ENCODE measurements at regions of chr20 and their contacts with region 1.

Region 1: DNA sequence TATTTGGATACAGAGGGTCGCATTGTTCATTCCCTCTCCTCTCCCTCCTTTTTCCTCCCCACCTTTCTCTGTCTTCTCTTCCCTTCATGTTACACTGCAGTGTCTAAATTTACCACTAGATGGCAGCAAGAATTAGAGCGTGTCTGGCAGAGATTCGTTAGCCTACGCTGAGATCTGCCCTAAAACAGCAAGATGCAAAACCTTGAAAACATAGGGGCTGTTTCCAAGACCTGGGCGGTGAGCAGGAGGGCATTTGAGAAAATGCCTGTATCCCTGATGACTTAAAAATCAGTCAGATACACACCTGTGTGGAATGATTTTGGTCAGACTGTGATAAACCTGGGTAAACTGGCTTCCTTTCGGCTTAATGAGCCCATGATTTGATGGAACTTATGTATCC is 101.5 kb upstream of the ISM1 start:
- DNase-seq: peak; percentile 51
- ATAC-seq: peak; percentile 88
- H3K4me3 ChIP-seq: no peak overlapping the region
- H3K27ac ChIP-seq: no peak overlapping the region
- H3K4me1 ChIP-seq: no peaks in the 10 kb centered on the region
- H3K27me3 ChIP-seq: peaks cover 19% of the 10 kb centered on the region
- CTCF ChIP-seq: peak; percentile 64 to 92 (median 82)
- POLR2A ChIP-seq: no peak
- RAD21 ChIP-seq: peak; percentile 74

Region 2: DNA sequence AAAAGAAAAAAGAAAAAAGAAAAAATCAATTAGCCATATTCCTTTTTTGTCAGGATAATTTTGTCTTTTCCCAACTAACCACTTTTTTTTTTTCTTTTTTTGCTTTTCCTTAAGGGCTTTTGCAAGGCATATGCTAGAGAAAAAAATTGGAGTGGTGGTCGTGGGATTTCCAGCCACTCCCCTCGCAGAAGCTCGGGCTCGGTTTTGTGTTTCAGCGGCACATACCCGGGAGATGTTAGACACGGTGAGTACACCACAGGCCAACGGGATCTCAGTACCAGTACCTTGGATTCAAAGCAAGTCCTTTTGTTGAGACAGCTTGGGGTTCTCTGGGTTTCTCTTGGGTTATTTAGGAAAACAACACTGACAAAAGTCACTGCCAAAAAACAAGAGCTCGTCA is 40.3 kb after region 1 on chr20:
- CTCF ChIA-PET with region 1: no interaction called
- POLR2A ChIA-PET with region 1: no interaction called
- RAD21 ChIA-PET with region 1: no interaction called
- intact Hi-C with region 1: no loop called
- DNase-seq: no peak
- ATAC-seq: no peak
- H3K4me3 ChIP-seq: no peak overlapping the region
- H3K27ac ChIP-seq: no peak overlapping the region
- H3K4me1 ChIP-seq: no peaks in the 10 kb centered on the region
- H3K27me3 ChIP-seq: peaks cover 9% of the 10 kb centered on the region; the same call in 1 of the 2 replicates
- CTCF ChIP-seq: no peak
- POLR2A ChIP-seq: no peak
- RAD21 ChIP-seq: no peak

Region 3: GRCh38 chr20:13174402-13174801 is 54.8 kb after region 1 on chr20:
- CTCF ChIA-PET with region 1: no interaction called
- POLR2A ChIA-PET with region 1: no interaction called
- RAD21 ChIA-PET with region 1: no interaction called
- intact Hi-C with region 1: no loop called
- DNase-seq: no peak
- ATAC-seq: no peak
- H3K4me3 ChIP-seq: no peak overlapping the region
- H3K27ac ChIP-seq: no peak overlapping the region
- H3K4me1 ChIP-seq: no peaks in the 10 kb centered on the region
- H3K27me3 ChIP-seq: no peaks in the 10 kb centered on the region
- CTCF ChIP-seq: no peak
- POLR2A ChIP-seq: no peak
- RAD21 ChIP-seq: no peak

Region 4: DNA sequence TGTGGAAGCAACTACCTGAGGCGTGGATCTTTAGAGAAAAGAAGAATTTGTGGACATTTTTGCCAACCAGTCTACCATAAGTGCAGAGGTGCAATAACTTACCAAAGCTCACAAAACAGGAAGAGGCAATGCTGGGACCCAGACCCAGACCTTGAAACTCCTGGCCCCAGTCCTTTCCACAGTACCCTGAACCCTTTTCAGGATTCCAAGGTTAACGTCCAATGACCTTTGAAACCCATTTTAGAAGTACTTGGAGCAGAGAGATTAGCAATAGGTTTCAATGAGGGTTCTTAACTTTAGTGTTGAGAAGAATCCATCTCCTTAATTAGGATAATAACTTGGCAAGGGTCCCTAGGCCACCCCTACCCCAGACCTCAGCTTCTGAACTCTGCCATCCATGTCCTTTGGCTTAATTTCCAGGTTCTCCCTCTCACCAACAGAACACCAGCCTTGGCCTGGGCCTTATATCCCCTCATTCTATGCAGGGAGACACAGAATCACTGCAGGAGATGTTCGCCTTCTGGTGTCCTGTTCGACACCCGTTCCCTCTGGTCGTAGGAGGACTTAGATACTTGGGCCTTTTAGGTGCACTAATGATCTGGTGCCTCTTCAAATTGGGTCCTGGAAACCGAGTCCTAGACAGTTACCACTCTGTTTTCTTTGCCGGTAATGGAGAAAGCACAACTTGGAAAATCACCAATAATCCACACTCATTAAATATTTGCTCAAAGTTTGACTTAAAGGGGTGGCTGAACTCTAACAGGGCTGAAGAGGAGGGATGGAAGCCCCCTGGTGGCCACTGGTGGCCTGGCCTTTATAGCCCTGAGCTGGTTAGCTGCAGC is 142.1 kb after region 1 on chr20:
- CTCF ChIA-PET with region 1: interaction called, 15 read pairs
- POLR2A ChIA-PET with region 1: no interaction called
- RAD21 ChIA-PET with region 1: no interaction called
- intact Hi-C with region 1: loop called (anchors 1 kb)
- DNase-seq: peak; percentile 26
- ATAC-seq: peak; percentile 98
- H3K4me3 ChIP-seq: no peak overlapping the region
- H3K27ac ChIP-seq: no peak overlapping the region
- H3K4me1 ChIP-seq: peaks cover 6 to 9% of the 10 kb centered on the region in 2 experiments; a peak in 3 of 4 replicates
- H3K27me3 ChIP-seq: no peaks in the 10 kb centered on the region
- CTCF ChIP-seq: peak; percentile 31 to 87 (median 86); a peak in 5 of 6 replicates
- POLR2A ChIP-seq: no peak
- RAD21 ChIP-seq: peak; percentile 47

Region 5: DNA sequence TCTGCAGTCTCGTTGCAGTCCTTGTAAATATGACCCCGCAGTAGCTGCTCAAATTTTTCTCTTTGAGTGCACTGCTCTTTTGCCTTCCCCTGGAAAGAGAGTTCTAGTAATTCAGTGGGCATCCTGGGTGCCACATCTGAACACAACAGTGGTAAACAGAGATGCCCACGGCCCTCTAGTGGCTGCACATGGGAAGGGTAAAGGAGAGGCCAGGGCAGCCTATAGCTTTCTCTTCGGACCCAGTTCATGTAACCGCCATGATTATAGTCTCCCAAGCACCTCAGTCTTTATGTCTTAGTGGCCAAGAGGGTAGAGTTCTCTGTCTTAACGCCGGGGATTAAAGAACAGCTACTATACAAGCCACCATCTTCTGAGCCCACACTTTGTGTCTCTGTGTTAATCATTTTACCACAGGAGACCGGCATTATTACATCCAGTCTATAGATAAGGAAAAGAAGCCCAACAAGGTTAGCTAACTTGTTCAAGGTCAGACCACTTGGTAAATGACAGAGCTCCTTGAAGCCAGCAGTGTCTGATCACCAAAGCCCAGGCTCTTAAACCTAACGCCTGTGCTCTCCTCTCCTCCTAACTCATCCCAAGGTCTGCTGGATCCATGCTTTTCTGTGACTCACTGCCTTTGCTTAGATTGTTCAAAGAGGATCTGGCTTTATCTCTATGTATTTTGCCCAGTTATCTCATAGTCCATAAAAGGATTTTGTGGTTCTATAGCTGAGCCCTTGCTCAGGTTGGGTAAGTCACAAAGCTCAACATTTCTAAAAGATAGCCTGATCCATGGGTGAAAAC is 183.3 kb after region 1 on chr20:
- CTCF ChIA-PET with region 1: interaction called, 7 read pairs
- POLR2A ChIA-PET with region 1: no interaction called
- RAD21 ChIA-PET with region 1: no interaction called
- intact Hi-C with region 1: loop called (anchors 1 kb)
- DNase-seq: peak; percentile 4
- ATAC-seq: peak; percentile 99
- H3K4me3 ChIP-seq: no peak overlapping the region
- H3K27ac ChIP-seq: no peak overlapping the region
- H3K4me1 ChIP-seq: no peaks in the 10 kb centered on the region
- H3K27me3 ChIP-seq: no peaks in the 10 kb centered on the region
- CTCF ChIP-seq: peak; percentile 21 to 84 (median 80); a peak in 5 of 6 replicates
- POLR2A ChIP-seq: no peak
- RAD21 ChIP-seq: peak; percentile 49

Region 6: GRCh38 chr20:13546497-13547131 is 427.0 kb after region 1 on chr20:
- CTCF ChIA-PET with region 1: interaction called, 15 read pairs
- POLR2A ChIA-PET with region 1: no interaction called
- RAD21 ChIA-PET with region 1: no interaction called
- intact Hi-C with region 1: loop called (anchors 5 kb)
- DNase-seq: peak; percentile 69
- ATAC-seq: peak; percentile 86
- H3K4me3 ChIP-seq: no peak overlapping the region
- H3K27ac ChIP-seq: no peak overlapping the region
- H3K4me1 ChIP-seq: no peaks in the 10 kb centered on the region
- H3K27me3 ChIP-seq: no peaks in the 10 kb centered on the region
- CTCF ChIP-seq: peak; percentile 53 to 89 (median 63); a peak in 5 of 6 replicates
- POLR2A ChIP-seq: no peak
- RAD21 ChIP-seq: peak; percentile 68

Region 7: DNA sequence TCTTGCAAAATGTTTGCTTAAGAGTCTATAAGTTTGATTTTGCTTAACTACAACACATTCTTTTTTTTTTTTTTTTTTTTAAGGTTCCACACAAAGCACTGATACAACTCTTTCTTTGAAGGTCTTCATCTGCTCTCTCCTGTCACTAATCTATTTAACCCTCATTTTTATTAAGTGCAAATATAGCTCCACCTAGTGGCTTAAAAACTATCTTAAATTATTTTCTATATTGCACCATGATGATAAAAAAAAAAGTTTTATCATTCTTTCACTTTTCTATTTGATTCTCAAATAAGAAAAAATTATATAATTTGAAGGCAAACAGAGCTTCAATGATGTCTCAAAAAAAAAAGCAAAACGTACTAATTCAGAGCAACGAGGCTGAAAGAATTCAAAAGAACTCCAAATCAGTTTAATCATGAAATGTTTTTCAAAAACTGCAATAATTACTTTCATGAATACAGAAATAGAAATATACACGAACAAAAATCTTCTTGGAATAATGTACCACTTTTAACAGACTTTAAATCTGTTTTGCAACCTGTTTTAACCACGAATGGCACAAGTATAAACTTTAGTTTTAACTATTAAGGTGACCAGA is 652.4 kb after region 1 on chr20:
- CTCF ChIA-PET with region 1: interaction called, 6 read pairs
- POLR2A ChIA-PET with region 1: no interaction called
- RAD21 ChIA-PET with region 1: no interaction called
- intact Hi-C with region 1: loop called (anchors 5 kb)
- DNase-seq: no peak
- ATAC-seq: no peak
- H3K4me3 ChIP-seq: no peak overlapping the region
- H3K27ac ChIP-seq: no peak overlapping the region
- H3K4me1 ChIP-seq: peaks cover 0 to under 1% of the 10 kb centered on the region in 2 experiments; a peak in 2 of 4 replicates
- H3K27me3 ChIP-seq: no peaks in the 10 kb centered on the region
- CTCF ChIP-seq: peak; percentile 8 to 50 (median 31); a peak in 3 of 6 replicates
- POLR2A ChIP-seq: no peak
- RAD21 ChIP-seq: peak; percentile 40

Region 8: DNA sequence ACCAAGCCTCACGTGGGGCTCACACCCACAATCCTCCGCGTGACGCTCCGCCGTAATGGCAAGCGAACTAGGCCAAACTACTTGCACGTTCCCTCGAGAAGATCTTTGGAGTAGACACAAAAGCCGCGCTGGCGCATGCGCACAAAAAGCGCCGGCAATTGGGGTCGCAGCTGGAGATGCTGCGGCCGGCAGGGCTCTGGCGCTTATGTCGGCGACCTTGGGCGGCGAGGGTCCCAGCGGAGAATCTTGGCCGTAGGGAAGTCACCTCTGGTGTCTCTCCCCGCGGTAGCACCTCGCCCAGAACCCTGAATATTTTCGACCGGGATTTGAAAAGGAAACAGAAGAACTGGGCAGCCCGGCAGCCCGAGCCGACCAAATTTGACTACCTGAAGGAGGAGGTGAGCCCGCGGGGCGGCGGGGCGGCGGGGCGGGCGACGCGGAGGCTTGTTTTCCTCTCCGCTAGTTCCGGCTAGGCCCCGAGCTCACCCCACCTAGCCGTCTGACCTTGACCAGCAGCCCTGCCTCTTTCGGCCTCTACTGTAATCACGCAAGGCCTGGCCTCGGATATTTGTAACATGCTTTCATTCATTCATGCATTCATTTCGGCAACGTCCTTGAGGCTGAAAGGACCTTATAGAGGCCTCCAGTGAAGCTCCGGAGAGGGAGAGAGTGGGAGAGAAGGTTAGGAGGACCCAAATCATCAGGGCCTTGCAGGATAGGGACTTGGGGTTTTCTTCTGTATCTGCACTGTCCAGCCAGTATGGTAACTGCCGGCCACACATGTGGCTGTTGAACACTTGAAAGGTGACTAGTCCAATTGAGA is 665.5 kb after region 1 on chr20 and contains the starts of genes ESF1 and NDUFAF5:
- CTCF ChIA-PET with region 1: interaction called, 3 read pairs
- POLR2A ChIA-PET with region 1: no interaction called
- RAD21 ChIA-PET with region 1: no interaction called
- intact Hi-C with region 1: loop called (anchors 5 kb)
- DNase-seq: peak; percentile 95
- ATAC-seq: peak; percentile 88
- H3K4me3 ChIP-seq: peak within 1 kb of the TSS; percentile 80 to 99
- H3K27ac ChIP-seq: peak within 1 kb of the TSS; percentile 64
- H3K4me1 ChIP-seq: peaks cover 7 to 18% of the 10 kb centered on the region in 2 experiments
- H3K27me3 ChIP-seq: no peaks in the 10 kb centered on the region
- CTCF ChIP-seq: no peak
- POLR2A ChIP-seq: peak; percentile 72
- RAD21 ChIP-seq: no peak
- total RNA-seq, gene ESF1: 25.4 TPM
- total RNA-seq, gene NDUFAF5: 30.8 TPM

Region 9: GRCh38 chr20:14055127-14055742 is 935.7 kb after region 1 on chr20:
- CTCF ChIA-PET with region 1: no interaction called
- POLR2A ChIA-PET with region 1: no interaction called
- RAD21 ChIA-PET with region 1: no interaction called
- intact Hi-C with region 1: loop called (anchors 10 kb)
- DNase-seq: peak; percentile 48
- ATAC-seq: peak; percentile 60; the same call in 1 of the 2 replicates
- H3K4me3 ChIP-seq: no peak overlapping the region
- H3K27ac ChIP-seq: no peak overlapping the region
- H3K4me1 ChIP-seq: no peaks in the 10 kb centered on the region
- H3K27me3 ChIP-seq: no peaks in the 10 kb centered on the region
- CTCF ChIP-seq: peak; percentile 45 to 77 (median 62); a peak in 5 of 6 replicates
- POLR2A ChIP-seq: no peak
- RAD21 ChIP-seq: peak; percentile 68

Measured in HCT116 (cell line).